Pancreas (tissue), 10 donors: ENCODE measurements at regions of chr11 and their contacts with region 1.

Region 1: DNA sequence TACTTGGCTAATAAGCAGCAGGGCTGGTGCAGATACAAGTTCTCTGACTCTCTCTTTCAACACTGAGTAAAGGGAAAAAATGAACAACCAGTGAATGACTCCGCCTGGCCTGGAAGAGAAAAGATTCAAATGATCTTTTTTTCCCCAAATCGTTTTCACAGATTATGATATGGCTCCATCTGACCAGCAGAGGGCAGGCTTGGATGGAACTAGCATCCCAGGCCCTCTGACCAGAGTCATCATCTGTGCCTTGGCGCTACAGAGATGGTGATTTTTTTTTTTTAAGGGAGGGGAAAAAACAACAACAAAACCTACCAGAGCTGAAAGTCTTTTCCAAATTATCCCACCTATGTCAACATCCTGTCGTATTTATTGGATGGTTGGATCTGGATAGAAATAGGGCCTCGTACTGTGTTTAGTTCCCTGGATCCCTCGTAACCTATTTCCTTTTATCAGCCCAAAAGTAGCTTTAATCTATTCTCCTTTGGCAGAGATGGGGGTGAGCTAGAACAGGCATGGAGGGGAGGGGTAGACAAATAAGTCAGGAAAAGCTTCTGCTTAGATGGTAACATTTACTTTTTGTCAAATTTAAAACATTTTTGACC is 69.7 kb downstream of the PRSS23 start:
- DNase-seq: peak in 5 of 6 donors; percentile 12 to 62 (median 42)
- ATAC-seq: peak; percentile 77 to 93 (median 91)
- H3K4me3 ChIP-seq: no peak overlapping the region
- H3K27ac ChIP-seq: no peak overlapping the region
- H3K4me1 ChIP-seq: no peaks in the 10 kb centered on the region
- H3K27me3 ChIP-seq: no peaks in the 10 kb centered on the region
- CTCF ChIP-seq: peak; percentile 46 to 81 (median 60)

Region 2: GRCh38 chr11:86781546-86781945 is 88.5 kb before region 1 on chr11:
- intact Hi-C with region 1: no loop called
- DNase-seq: no peak
- ATAC-seq: no peak
- H3K4me3 ChIP-seq: no peak overlapping the region
- H3K27ac ChIP-seq: no peak overlapping the region
- H3K4me1 ChIP-seq: no peaks in the 10 kb centered on the region
- H3K27me3 ChIP-seq: no peaks in the 10 kb centered on the region
- CTCF ChIP-seq: no peak

Region 3: DNA sequence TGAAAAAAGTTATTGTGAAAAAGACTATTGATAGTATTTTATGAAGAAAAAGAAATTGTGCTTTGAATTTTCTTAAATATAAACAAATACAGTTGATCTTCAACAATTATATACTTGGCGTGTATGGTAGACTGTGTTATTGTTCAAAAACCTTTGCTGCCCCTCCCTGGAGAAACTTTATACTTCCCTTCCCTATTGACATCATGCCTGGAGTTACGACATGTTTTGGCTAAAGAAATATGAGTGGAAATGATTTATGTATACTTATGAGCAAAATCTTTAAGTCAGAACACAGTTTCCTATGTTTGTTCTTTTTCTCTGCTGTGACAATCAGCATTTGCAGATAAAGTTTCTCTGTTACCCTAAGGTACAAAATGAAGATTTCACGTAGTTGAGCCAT is 411.4 kb after region 1 on chr11:
- intact Hi-C with region 1: loop called in 1 of 3 experiments (anchors 10 kb)
- DNase-seq: no peak
- ATAC-seq: peak; percentile 64 to 82 (median 68)
- H3K4me3 ChIP-seq: no peak overlapping the region
- H3K27ac ChIP-seq: no peak overlapping the region
- H3K4me1 ChIP-seq: no peaks in the 10 kb centered on the region
- H3K27me3 ChIP-seq: no peaks in the 10 kb centered on the region
- CTCF ChIP-seq: no peak

Region 4: DNA sequence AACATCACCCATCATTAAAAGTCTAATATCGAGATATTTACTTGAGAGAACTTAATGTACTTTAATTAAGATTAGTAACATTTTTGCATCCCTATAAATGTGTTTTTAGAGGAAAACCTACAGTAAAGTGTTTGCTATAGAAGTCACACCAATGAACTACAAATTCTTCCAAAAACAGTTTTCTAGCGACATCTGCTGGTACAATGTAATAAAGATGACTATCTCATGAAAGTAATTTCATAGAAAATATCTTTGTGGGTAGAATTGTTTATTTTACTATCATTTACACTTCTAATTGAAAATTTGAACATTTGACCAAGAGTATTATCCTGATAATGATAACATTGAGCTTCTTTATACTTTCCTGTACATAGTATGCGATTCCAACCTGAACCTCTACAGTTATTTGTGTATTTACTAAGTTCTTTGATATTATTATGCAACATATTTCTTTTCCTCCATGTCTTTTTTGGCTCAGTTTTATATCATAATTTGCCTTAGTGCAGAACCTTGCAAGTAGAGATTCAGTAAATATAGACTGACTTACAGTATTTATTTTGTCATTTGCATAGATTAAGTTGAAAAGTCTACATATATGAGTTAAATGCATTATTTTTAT is 420.3 kb after region 1 on chr11:
- intact Hi-C with region 1: loop called in 2 of 3 experiments (anchors 10 kb)
- DNase-seq: no peak
- ATAC-seq: peak; percentile 58 to 82 (median 70)
- H3K4me3 ChIP-seq: no peak overlapping the region
- H3K27ac ChIP-seq: no peak overlapping the region
- H3K4me1 ChIP-seq: no peaks in the 10 kb centered on the region
- H3K27me3 ChIP-seq: no peaks in the 10 kb centered on the region
- CTCF ChIP-seq: peak; percentile 14 to 43 (median 38)